Uterus (tissue), 4 donors: ENCODE measurements at regions of chr9 and their contacts with region 1.

Region 1: GRCh38 chr9:27333241-27334052 is 36.5 kb upstream of the EQTN start:
- DNase-seq: peak; percentile 61 to 72
- H3K4me3 ChIP-seq: no peak overlapping the region
- H3K27ac ChIP-seq: peak overlapping the region in 1 of 2 donors; percentile 36
- H3K4me1 ChIP-seq: peaks cover 1 to 11% of the 10 kb centered on the region in 2 donors
- H3K27me3 ChIP-seq: no peaks in the 10 kb centered on the region
- CTCF ChIP-seq: peak; percentile 82 to 90 (median 84)
- POLR2A ChIP-seq: no peak

Region 2: DNA sequence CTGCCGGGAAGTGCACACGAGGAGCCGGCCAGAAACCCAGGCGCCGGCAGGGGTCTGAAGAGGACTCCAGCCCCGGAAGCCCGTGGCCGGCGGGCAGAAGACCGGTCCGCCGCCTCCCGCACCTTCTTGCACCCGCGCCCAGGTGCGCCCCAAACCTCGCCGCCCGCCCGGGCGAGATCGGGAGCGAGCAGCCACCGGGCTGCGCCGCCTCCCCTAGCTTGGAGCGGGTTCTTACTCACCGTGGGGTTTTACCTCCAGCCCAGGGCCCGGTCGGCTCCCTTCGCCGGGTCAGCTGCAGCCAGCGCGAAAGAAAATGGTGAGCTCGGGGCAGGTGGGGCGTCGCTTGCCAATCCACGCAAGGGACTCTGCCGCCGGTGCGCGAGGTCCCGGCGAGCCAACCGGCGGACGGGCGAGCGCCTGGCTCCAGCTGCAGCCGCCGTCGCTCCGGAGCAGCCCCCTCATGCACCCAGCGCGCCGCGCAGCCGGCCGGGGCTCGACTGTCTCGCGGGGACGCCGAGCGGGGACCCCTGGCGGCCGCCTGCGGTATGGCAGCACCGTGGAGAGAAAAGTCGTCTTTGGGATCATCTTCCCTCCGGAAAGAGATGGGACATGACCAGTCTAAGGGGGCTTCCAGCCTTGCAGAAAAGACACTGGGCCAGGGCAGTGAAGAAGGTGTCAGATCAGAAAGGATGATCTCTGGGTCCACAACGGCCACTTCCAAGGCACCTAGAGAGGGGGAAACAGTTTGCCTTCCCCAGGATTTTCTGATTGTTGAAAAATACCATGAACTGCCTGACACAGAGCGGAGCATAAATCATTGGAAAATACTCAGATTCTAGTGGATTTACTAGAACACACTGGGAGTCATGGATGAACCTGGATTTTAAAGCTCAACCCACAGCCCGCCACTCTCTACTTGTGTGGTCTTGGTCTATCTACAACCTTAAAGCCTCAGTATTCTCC is 196.2 kb after region 1 on chr9 and contains the start of gene MOB3B:
- intact Hi-C with region 1: loop called (anchors 5 kb)
- DNase-seq: peak; percentile 82 to 88
- H3K4me3 ChIP-seq: peak within 1 kb of the TSS; percentile 84 to 89
- H3K27ac ChIP-seq: peak within 1 kb of the TSS; percentile 94 to 95
- H3K4me1 ChIP-seq: peaks cover 0 to 8% of the 10 kb centered on the region in 2 donors
- H3K27me3 ChIP-seq: no peaks in the 10 kb centered on the region
- CTCF ChIP-seq: peak; percentile 92 to 97 (median 97)
- POLR2A ChIP-seq: peak in 1 of 2 donors; percentile 66
- total RNA-seq, gene MOB3B: 2.0 to 34.4 (median 12.6) TPM

Region 3: GRCh38 chr9:27548055-27548741 is 214.8 kb after region 1 on chr9:
- intact Hi-C with region 1: loop called (anchors 5 kb)
- DNase-seq: no peak
- H3K4me3 ChIP-seq: no peak overlapping the region
- H3K27ac ChIP-seq: peak overlapping the region in 1 of 2 donors; percentile 52
- H3K4me1 ChIP-seq: no peaks in the 10 kb centered on the region
- H3K27me3 ChIP-seq: no peaks in the 10 kb centered on the region
- CTCF ChIP-seq: peak; percentile 51 to 72 (median 62)
- POLR2A ChIP-seq: no peak